Activated CD8-positive, alpha-beta T cell treated with anti-CD3 and anti-CD28 coated beads for 36 hours (primary cell): ENCODE measurements at regions of chr9 and their contacts with region 1.

Region 1: DNA sequence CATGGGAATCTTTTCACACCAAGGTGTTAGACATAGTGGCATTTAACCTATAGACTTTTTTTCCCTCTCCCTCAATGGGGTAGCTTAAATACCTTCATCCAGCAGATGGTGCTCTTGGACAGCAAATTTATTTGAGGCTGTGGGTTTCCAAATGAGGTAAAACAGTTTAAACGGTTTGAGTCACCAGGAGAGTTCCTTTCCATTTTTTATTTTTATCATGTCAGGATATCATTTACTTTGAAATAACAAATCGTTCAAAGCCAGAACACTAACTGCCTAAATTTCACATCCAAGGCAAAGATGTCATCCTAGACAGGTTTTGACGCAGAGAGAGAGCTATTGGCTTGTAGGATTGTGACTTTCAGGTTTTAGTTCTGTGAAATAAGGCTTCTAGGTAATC is 69.7 kb downstream of the KDM4C start:
- DNase-seq: peak; percentile 56
- ATAC-seq: peak; percentile 85
- H3K4me3 Mint-ChIP-seq: no peak overlapping the region
- H3K27ac Mint-ChIP-seq: peak overlapping the region; percentile 39
- H3K4me1 Mint-ChIP-seq: peaks cover 13% of the 10 kb centered on the region
- H3K27me3 Mint-ChIP-seq: no peaks in the 10 kb centered on the region
- CTCF ChIP-seq: peak; percentile 71

Region 2: GRCh38 chr9:6733257-6733656 is 94.2 kb before region 1 on chr9:
- CTCF ChIA-PET with region 1: no interaction called
- POLR2A ChIA-PET with region 1: no interaction called
- intact Hi-C with region 1: no loop called
- DNase-seq: no peak
- ATAC-seq: no peak
- H3K4me3 Mint-ChIP-seq: no peak overlapping the region
- H3K27ac Mint-ChIP-seq: no peak overlapping the region
- H3K4me1 Mint-ChIP-seq: no peaks in the 10 kb centered on the region
- H3K27me3 Mint-ChIP-seq: no peaks in the 10 kb centered on the region
- CTCF ChIP-seq: no peak

Region 3: DNA sequence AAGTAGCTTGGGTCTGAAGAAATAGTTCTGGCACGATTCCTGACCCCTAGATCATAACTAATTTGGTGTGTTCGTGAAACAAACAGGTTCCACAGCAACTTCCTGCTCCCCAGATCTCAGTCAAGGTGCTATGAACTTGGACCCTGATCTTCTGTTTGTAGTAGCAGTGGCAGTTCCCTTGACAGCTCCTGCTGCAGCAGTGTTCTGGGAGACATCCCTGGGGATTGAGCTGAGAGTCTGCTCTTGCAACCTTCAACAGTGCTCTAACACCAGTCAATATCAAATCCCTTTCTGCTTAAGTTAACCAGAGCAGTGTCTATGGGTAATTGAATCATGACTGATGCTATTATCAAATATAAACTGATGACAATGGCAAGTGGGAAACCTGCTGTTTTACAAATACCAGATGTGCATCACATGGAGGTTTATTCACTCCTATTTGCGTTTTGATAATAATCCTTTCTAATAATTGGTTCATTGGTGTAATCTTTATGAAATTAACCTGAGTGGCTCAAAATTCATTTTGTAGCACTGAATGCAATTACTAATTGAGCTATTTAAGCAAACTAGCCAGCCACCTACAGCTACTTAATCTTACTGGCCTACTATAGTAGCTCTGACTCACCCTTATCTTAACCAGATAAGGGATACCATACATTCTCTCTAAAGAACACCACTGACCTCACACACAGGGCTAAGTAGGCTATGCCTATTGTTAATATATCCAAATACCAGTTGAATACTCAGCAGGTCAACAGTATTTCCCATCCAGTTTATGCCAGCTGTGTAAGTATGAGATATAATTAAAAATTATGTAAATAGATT is 47.8 kb before region 1 on chr9:
- CTCF ChIA-PET with region 1: no interaction called
- POLR2A ChIA-PET with region 1: no interaction called
- intact Hi-C with region 1: no loop called
- DNase-seq: no peak
- ATAC-seq: no peak
- H3K4me3 Mint-ChIP-seq: no peak overlapping the region
- H3K27ac Mint-ChIP-seq: no peak overlapping the region
- H3K4me1 Mint-ChIP-seq: peaks cover 59% of the 10 kb centered on the region
- H3K27me3 Mint-ChIP-seq: no peaks in the 10 kb centered on the region
- CTCF ChIP-seq: no peak

Region 4: DNA sequence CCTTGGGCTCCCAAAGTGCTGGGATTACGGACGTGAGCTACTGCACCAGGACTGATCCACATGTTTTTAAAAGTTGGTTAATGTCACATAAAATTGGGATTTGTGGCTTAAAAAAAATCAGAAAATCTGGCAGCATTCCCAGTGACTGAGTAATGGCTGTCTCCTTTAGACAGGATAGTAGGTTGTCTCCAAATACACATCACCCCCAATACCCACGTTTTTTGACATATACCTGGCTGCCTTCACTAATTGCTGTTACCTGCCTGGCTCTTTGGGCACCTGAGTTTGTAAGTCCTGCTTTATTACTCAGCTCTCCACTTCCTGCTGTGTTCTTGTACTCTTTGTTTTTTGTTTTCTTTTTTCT is 15.1 kb after region 1 on chr9:
- CTCF ChIA-PET with region 1: interaction called, 16 read pairs
- POLR2A ChIA-PET with region 1: no interaction called
- intact Hi-C with region 1: no loop called
- DNase-seq: no peak
- ATAC-seq: no peak
- H3K4me3 Mint-ChIP-seq: no peak overlapping the region
- H3K27ac Mint-ChIP-seq: no peak overlapping the region
- H3K4me1 Mint-ChIP-seq: peaks cover 11% of the 10 kb centered on the region
- H3K27me3 Mint-ChIP-seq: no peaks in the 10 kb centered on the region
- CTCF ChIP-seq: no peak

Region 5: DNA sequence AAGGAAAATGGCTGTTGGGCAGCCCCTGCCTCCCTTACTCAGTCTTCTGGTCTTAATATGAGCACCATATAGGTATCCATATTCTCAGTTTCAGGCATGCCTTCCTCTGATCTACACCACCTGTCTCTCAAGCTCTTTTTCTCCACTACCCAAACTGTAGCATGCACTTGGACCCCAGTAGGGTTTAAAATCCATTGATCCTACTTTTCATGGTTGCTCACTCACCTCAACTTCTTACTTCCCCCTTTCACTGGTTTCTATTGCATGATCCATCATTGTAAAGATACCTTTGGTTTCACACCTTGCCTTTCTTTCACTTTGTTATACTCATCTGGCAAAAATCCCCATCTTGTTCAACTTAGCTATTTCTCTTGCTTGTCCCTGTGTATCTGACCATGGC is 89.7 kb after region 1 on chr9:
- CTCF ChIA-PET with region 1: no interaction called
- POLR2A ChIA-PET with region 1: no interaction called
- intact Hi-C with region 1: no loop called
- DNase-seq: no peak
- ATAC-seq: peak; percentile 39
- H3K4me3 Mint-ChIP-seq: no peak overlapping the region
- H3K27ac Mint-ChIP-seq: no peak overlapping the region
- H3K4me1 Mint-ChIP-seq: peaks cover 44% of the 10 kb centered on the region
- H3K27me3 Mint-ChIP-seq: no peaks in the 10 kb centered on the region
- CTCF ChIP-seq: no peak

Region 6: DNA sequence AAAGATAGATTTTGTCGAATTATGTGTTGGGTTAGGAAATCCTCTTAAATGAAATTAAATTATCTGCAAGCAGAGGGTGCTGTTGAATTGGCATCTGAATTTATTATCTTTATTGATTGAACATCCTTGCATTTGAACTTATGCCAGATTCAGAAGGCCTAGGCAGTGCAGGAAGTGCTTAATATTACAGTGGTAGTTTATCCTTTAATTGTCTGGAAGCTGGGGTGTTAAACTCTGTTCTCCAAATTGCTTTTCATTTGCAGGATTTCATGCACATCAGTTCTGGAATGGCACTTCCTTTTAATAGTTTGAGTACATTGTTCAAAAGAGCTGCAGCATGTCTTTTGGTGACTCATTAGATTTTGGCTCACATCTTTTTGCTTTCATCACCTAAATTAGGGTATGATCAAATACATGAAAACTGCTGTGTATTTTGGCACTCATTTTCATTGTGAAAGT is 116.7 kb after region 1 on chr9:
- CTCF ChIA-PET with region 1: interaction called, 10 read pairs
- POLR2A ChIA-PET with region 1: no interaction called
- intact Hi-C with region 1: no loop called
- DNase-seq: no peak
- ATAC-seq: no peak
- H3K4me3 Mint-ChIP-seq: no peak overlapping the region
- H3K27ac Mint-ChIP-seq: no peak overlapping the region
- H3K4me1 Mint-ChIP-seq: peaks cover 15% of the 10 kb centered on the region
- H3K27me3 Mint-ChIP-seq: no peaks in the 10 kb centered on the region
- CTCF ChIP-seq: no peak

Region 7: GRCh38 chr9:6984941-6985578 is 157.6 kb after region 1 on chr9:
- CTCF ChIA-PET with region 1: interaction called, 14 read pairs
- POLR2A ChIA-PET with region 1: no interaction called
- intact Hi-C with region 1: no loop called
- DNase-seq: no peak
- ATAC-seq: no peak
- H3K4me3 Mint-ChIP-seq: no peak overlapping the region
- H3K27ac Mint-ChIP-seq: no peak overlapping the region
- H3K4me1 Mint-ChIP-seq: no peaks in the 10 kb centered on the region
- H3K27me3 Mint-ChIP-seq: no peaks in the 10 kb centered on the region
- CTCF ChIP-seq: no peak

Region 8: GRCh38 chr9:7055201-7055903 is 227.9 kb after region 1 on chr9:
- CTCF ChIA-PET with region 1: interaction called, 22 read pairs
- POLR2A ChIA-PET with region 1: no interaction called
- intact Hi-C with region 1: loop called (anchors 10 kb)
- DNase-seq: no peak
- ATAC-seq: no peak
- H3K4me3 Mint-ChIP-seq: no peak overlapping the region
- H3K27ac Mint-ChIP-seq: no peak overlapping the region
- H3K4me1 Mint-ChIP-seq: peaks cover 8% of the 10 kb centered on the region
- H3K27me3 Mint-ChIP-seq: no peaks in the 10 kb centered on the region
- CTCF ChIP-seq: no peak

Region 9: GRCh38 chr9:7536310-7536939 is 709.0 kb after region 1 on chr9:
- CTCF ChIA-PET with region 1: interaction called, 4 read pairs
- POLR2A ChIA-PET with region 1: no interaction called
- intact Hi-C with region 1: loop called (anchors 2 kb)
- DNase-seq: peak; percentile 68
- ATAC-seq: peak; percentile 37
- H3K4me3 Mint-ChIP-seq: no peak overlapping the region
- H3K27ac Mint-ChIP-seq: no peak overlapping the region
- H3K4me1 Mint-ChIP-seq: peaks cover 25% of the 10 kb centered on the region
- H3K27me3 Mint-ChIP-seq: peaks cover 12% of the 10 kb centered on the region
- CTCF ChIP-seq: peak; percentile 81